Naive thymus-derived CD4-positive, alpha-beta T cell (primary cell): ENCODE measurements at regions of chrX and their contacts with region 1.

Region 1: GRCh38 chrX:130024127-130024526 is 41.7 kb downstream of the BCORL1 start:
- DNase-seq: peak; percentile 42 to 86 (median 81)
- ATAC-seq: peak; percentile 100
- H3K4me3 ChIP-seq: no peak overlapping the region
- H3K4me3 Mint-ChIP-seq: peak overlapping the region in 7 of 10 donors; percentile 43 to 75 (median 50)
- H3K27ac ChIP-seq: peak overlapping the region; percentile 34
- H3K27ac Mint-ChIP-seq: peak overlapping the region; percentile 54 to 81 (median 76)
- H3K4me1 ChIP-seq: peaks cover 4 to 13% of the 10 kb centered on the region in 2 donors
- H3K4me1 Mint-ChIP-seq: peaks cover 0 to 19% (median 10%) of the 10 kb centered on the region in 7 donors
- H3K27me3 ChIP-seq: no peaks in the 10 kb centered on the region
- H3K27me3 Mint-ChIP-seq: no peaks in the 10 kb centered on the region

Region 2: GRCh38 chrX:129843459-129844306 is 180.4 kb before region 1 on chrX and contains the start of gene ZDHHC9:
- CTCF ChIA-PET with region 1: no interaction called
- POLR2A ChIA-PET with region 1: no interaction called
- intact Hi-C with region 1: loop called in 1 of 2 experiments (anchors 10 kb)
- DNase-seq: peak; percentile 62 to 85 (median 81)
- ATAC-seq: peak; percentile 98
- H3K4me3 ChIP-seq: peak within 1 kb of the TSS; percentile 95
- H3K4me3 Mint-ChIP-seq: peak within 1 kb of the TSS; percentile 86 to 98 (median 92)
- H3K27ac ChIP-seq: peak within 1 kb of the TSS; percentile 76
- H3K27ac Mint-ChIP-seq: peak within 1 kb of the TSS; percentile 68 to 91 (median 80)
- H3K4me1 ChIP-seq: peaks cover 5 to 15% of the 10 kb centered on the region in 2 donors
- H3K4me1 Mint-ChIP-seq: peaks cover 4 to 39% (median 28%) of the 10 kb centered on the region in 7 donors
- H3K27me3 ChIP-seq: no peaks in the 10 kb centered on the region
- H3K27me3 Mint-ChIP-seq: no peaks in the 10 kb centered on the region
- total RNA-seq, gene ZDHHC9: 4.9 to 9.1 (median 7.1) TPM

Region 3: DNA sequence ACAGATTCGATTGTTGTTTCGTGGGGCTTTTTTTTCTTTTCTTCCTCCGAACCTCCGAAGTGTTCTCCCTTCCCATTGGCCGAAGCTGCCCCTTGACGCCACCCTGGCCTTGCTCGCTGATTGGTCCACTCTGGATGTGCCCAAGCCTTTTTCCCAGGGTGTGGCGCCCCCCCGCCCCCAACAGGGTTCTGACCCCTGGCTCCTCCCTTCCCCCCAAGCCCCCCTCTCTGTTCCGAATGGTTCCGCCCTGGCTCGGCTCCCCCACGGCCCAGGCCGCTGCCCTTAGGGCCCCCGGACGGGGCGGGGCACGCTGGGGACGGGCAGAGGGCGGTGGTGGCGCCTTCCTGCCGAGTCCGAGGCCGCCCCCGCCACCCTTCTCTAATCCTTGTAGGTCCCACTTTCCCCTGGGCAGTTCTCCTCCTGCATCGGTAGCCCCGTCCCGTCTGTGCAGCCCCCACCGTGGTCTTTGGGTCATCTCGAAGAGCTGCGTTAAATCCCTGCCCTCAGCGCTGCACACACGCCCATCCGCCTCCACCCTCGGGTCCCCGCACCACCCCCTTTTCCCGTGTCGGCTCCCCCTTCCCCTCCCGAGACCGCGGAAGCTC is 92.6 kb before region 1 on chrX:
- CTCF ChIA-PET with region 1: interaction called, 106 read pairs
- POLR2A ChIA-PET with region 1: interaction called, 3 read pairs
- intact Hi-C with region 1: loop called (anchors 1 kb)
- DNase-seq: peak; percentile 18 to 58 (median 33)
- ATAC-seq: peak; percentile 75
- H3K4me3 ChIP-seq: peak overlapping the region; percentile 61
- H3K4me3 Mint-ChIP-seq: peak overlapping the region; percentile 66 to 89 (median 80)
- H3K27ac ChIP-seq: peak overlapping the region; percentile 59
- H3K27ac Mint-ChIP-seq: peak overlapping the region; percentile 70 to 92 (median 85)
- H3K4me1 ChIP-seq: no peaks in the 10 kb centered on the region
- H3K4me1 Mint-ChIP-seq: peaks cover 0 to 6% (median 5%) of the 10 kb centered on the region in 7 donors
- H3K27me3 ChIP-seq: no peaks in the 10 kb centered on the region
- H3K27me3 Mint-ChIP-seq: peaks cover 0 to 20% (median 0%) of the 10 kb centered on the region in 5 donors

Region 4: GRCh38 chrX:129945146-129945545 is 79.0 kb before region 1 on chrX:
- CTCF ChIA-PET with region 1: no interaction called
- POLR2A ChIA-PET with region 1: no interaction called
- intact Hi-C with region 1: no loop called
- DNase-seq: no peak
- ATAC-seq: no peak
- H3K4me3 ChIP-seq: no peak overlapping the region
- H3K4me3 Mint-ChIP-seq: no peak overlapping the region
- H3K27ac ChIP-seq: no peak overlapping the region
- H3K27ac Mint-ChIP-seq: no peak overlapping the region
- H3K4me1 ChIP-seq: no peaks in the 10 kb centered on the region
- H3K4me1 Mint-ChIP-seq: peaks cover 0 to 3% (median 0%) of the 10 kb centered on the region in 7 donors
- H3K27me3 ChIP-seq: no peaks in the 10 kb centered on the region
- H3K27me3 Mint-ChIP-seq: peaks cover 0 to 10% (median 0%) of the 10 kb centered on the region in 5 donors

Region 5: GRCh38 chrX:129982274-129983251 is 41.6 kb before region 1 on chrX and contains the start of gene BCORL1:
- CTCF ChIA-PET with region 1: interaction called, 4 read pairs
- POLR2A ChIA-PET with region 1: no interaction called
- intact Hi-C with region 1: loop called (anchors 1 kb)
- DNase-seq: peak; percentile 62 to 89 (median 84)
- ATAC-seq: peak; percentile 96
- H3K4me3 ChIP-seq: peak within 1 kb of the TSS; percentile 61
- H3K4me3 Mint-ChIP-seq: peak within 1 kb of the TSS in 1 of 10 donors; percentile 85
- H3K27ac ChIP-seq: no peak within 1 kb of the TSS
- H3K27ac Mint-ChIP-seq: peak within 1 kb of the TSS in 7 of 9 donors; percentile 31 to 82 (median 59)
- H3K4me1 ChIP-seq: no peaks in the 10 kb centered on the region
- H3K4me1 Mint-ChIP-seq: peaks cover 19 to 34% (median 27%) of the 10 kb centered on the region in 7 donors
- H3K27me3 ChIP-seq: no peaks in the 10 kb centered on the region
- H3K27me3 Mint-ChIP-seq: peaks cover 0 to 30% (median 0%) of the 10 kb centered on the region in 5 donors
- total RNA-seq, gene BCORL1: 5.8 to 8.9 (median 8.2) TPM